Body of pancreas (tissue), 4 donors: ENCODE measurements at regions of chr10 and their contacts with region 1.

Region 1: DNA sequence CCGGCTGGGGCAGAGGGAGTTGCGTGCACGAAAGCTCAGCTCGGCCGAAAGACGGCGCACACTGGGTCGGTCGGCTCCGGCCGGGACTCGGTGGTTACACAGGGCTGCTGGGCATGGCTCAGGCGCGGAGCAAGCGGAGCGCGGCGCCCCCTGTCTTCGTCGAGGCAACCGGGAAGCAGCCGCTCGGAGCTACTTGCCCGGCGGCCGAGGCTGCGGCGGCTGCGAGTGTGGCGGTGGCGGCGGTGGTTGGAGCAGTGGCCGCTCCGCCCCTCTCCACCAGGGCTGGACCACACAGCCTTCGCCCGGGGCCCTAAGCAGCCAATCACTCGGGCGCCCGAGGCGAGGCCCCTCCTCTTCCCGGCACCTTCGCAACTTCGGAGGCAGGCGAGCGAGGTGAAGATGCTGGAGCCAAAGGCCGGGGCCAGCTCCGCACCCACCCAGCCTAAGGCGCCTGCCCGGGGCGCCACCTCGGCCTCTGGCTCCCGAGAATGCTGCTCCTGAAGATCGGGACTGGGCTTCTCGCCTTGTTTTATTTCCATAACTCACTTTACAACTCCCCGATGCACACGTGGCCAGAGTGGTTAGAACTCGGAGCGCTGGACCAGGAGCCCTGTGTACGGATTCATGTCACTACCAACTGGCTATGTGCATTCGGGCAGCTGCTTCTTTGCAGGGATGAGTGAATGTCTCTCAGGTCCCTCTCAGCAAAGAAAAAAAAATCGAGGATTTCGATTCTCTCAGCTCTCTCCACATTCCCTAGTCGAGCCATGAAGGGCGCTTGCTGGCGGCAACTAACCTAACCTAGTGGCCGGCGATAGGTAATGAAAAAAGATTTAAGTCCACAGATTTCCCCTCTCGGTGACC is at the start of gene TLL2:
- DNase-seq: peak; percentile 85 to 93 (median 89)
- ATAC-seq: peak; percentile 96
- H3K4me3 ChIP-seq: peak within 1 kb of the TSS; percentile 2 to 18
- H3K27ac ChIP-seq: peak within 1 kb of the TSS in 1 of 4 donors; percentile 32
- H3K4me1 ChIP-seq: peaks cover 24% of the 10 kb centered on the region
- H3K27me3 ChIP-seq: no peaks in the 10 kb centered on the region
- CTCF ChIP-seq: peak; percentile 63 to 90 (median 82)
- POLR2A ChIP-seq: peak in 2 of 3 donors; percentile 52 to 59
- total RNA-seq, gene TLL2: not detected

Region 2: DNA sequence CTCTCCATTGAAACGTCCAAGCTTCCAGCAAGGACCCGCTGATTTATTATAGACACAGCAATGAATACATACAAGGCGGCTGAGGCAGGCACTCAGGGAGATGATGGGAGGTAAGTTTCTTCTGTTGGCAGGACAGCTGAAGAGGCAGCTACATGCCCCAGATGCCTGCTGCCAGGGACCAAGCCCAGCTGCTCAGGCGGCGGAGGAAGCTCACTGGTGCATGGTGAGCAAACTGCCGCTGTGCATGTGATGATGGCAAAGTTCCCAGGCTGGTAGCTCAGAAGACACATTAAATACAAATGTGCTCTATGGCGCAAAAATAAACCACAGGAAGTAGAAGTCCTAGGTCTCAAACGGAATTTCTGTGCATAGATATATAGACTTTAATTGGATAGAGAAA is 207.4 kb before region 1 on chr10:
- intact Hi-C with region 1: no loop called
- DNase-seq: peak in 3 of 4 donors; percentile 40 to 65 (median 50)
- ATAC-seq: no peak
- H3K4me3 ChIP-seq: no peak overlapping the region
- H3K27ac ChIP-seq: no peak overlapping the region
- H3K4me1 ChIP-seq: no peaks in the 10 kb centered on the region
- H3K27me3 ChIP-seq: no peaks in the 10 kb centered on the region
- CTCF ChIP-seq: no peak
- POLR2A ChIP-seq: no peak

Region 3: GRCh38 chr10:96374985-96375830 is 138.7 kb before region 1 on chr10:
- intact Hi-C with region 1: loop called (anchors 5 kb)
- DNase-seq: peak; percentile 88 to 92 (median 90)
- ATAC-seq: peak; percentile 93
- H3K4me3 ChIP-seq: no peak overlapping the region
- H3K27ac ChIP-seq: no peak overlapping the region
- H3K4me1 ChIP-seq: peaks cover 11% of the 10 kb centered on the region
- H3K27me3 ChIP-seq: no peaks in the 10 kb centered on the region
- CTCF ChIP-seq: peak; percentile 89 to 99 (median 98)
- POLR2A ChIP-seq: no peak